ENCODE measurements at regions of chr9 and their contacts with region 1.

Region 1: GRCh38 chr9:131762356-131762932 is 22.6 kb upstream of the RAPGEF1 start:
- DNase-seq: peak; percentile 77 to 93 (median 90)
- ATAC-seq: peak; percentile 99
- H3K4me3 ChIP-seq: no peak overlapping the region
- H3K27ac ChIP-seq: no peak overlapping the region
- H3K4me1 ChIP-seq: peaks cover 0 to 7% of the 10 kb centered on the region in 2 experiments; a peak in 2 of 5 replicates
- H3K27me3 ChIP-seq: peaks cover 12 to 30% of the 10 kb centered on the region in 2 experiments
- CTCF ChIP-seq: peak; percentile 79 to 98 (median 92)
- EP300 ChIP-seq: no peak
- POLR2A ChIP-seq: no peak
- RAD21 ChIP-seq: peak; percentile 91 to 96

Region 2: DNA sequence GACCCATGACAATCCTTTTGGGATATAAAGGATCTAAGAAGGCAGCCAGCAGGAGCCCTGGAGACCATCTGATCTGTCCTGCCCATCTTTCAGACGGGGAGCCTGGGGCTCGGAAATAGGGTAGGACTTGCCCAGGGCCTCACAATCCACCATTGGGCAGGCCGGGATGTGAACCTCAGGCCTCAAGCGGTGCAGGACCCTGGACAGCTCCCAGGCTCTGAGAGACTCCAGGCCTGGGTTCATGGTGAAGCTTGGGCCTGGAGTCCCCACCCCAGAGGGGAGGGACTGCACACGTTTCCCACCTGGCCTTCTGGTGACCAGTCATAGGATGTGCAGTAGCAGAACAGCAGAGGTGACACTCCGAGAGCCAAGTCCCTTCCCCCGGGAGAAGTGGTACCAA is 14.0 kb after region 1 on chr9:
- CTCF ChIA-PET with region 1: no interaction called
- POLR2A ChIA-PET with region 1: no interaction called
- in situ Hi-C with region 1: no loop called
- intact Hi-C with region 1: no loop called
- DNase-seq: peak; percentile 62 to 76 (median 72)
- ATAC-seq: peak; percentile 88
- H3K4me3 ChIP-seq: no peak overlapping the region
- H3K27ac ChIP-seq: no peak overlapping the region
- H3K4me1 ChIP-seq: peaks cover 0 to 3% of the 10 kb centered on the region in 2 experiments; a peak in 2 of 5 replicates
- H3K27me3 ChIP-seq: peaks cover 2 to 39% of the 10 kb centered on the region in 2 experiments; a peak in 3 of 5 replicates
- CTCF ChIP-seq: no peak
- EP300 ChIP-seq: no peak
- POLR2A ChIP-seq: no peak
- RAD21 ChIP-seq: no peak

Region 3: GRCh38 chr9:131854896-131855613 is 92.6 kb after region 1 on chr9:
- CTCF ChIA-PET with region 1: interaction called, 5 read pairs
- POLR2A ChIA-PET with region 1: no interaction called
- in situ Hi-C with region 1: no loop called
- intact Hi-C with region 1: loop called (anchors 2 kb)
- DNase-seq: no peak
- ATAC-seq: no peak
- H3K4me3 ChIP-seq: no peak overlapping the region
- H3K27ac ChIP-seq: no peak overlapping the region
- H3K4me1 ChIP-seq: peaks cover 0 to 7% of the 10 kb centered on the region in 2 experiments; a peak in 3 of 5 replicates
- H3K27me3 ChIP-seq: peaks cover 10 to 37% of the 10 kb centered on the region in 2 experiments; a peak in 4 of 5 replicates
- CTCF ChIP-seq: no peak
- EP300 ChIP-seq: no peak
- POLR2A ChIP-seq: no peak
- RAD21 ChIP-seq: no peak

Region 4: GRCh38 chr9:132006677-132007370 is 244.4 kb after region 1 on chr9:
- CTCF ChIA-PET with region 1: no interaction called
- POLR2A ChIA-PET with region 1: no interaction called
- in situ Hi-C with region 1: no loop called
- intact Hi-C with region 1: no loop called
- DNase-seq: no peak
- ATAC-seq: no peak
- H3K4me3 ChIP-seq: no peak overlapping the region
- H3K27ac ChIP-seq: no peak overlapping the region
- H3K4me1 ChIP-seq: peaks cover 0 to 3% of the 10 kb centered on the region in 2 experiments; a peak in 1 of 5 replicates
- H3K27me3 ChIP-seq: no peaks in the 10 kb centered on the region
- CTCF ChIP-seq: no peak
- EP300 ChIP-seq: no peak
- POLR2A ChIP-seq: no peak
- RAD21 ChIP-seq: no peak

Region 5: DNA sequence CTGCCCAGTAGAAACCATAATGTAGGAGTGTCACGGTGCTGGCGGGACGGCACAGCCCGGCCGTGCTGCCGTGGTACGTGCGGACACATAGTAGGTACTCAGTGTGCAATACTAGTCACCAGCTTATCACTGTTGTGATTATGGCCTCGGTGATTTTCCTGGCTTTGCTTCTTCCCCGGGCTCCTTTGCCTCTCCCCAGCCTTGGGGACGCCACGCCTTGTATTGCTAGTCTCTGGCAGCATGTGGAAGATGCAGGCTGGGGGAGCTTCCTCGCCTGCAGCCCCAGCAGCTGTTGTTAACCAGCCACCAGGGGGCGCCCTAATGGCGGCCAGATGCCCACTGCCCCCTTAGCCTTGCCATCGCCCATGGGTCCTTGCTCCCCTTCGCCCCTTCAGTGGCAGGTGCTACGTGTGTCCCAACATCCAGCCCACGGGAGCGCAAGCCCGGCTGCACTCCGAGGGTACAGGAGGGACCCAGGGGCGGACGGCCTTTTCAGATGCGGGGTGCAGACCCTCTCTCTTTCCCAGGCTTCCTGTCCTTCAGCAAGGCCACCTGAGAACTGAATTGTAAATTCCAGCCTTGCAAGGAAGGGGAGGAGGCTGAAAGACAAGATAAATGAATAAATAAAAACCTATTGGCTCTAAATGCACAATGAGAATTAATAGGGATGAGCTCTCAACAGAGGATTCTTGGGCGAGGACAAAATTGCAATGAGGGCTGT is 407.4 kb after region 1 on chr9:
- CTCF ChIA-PET with region 1: no interaction called
- POLR2A ChIA-PET with region 1: no interaction called
- in situ Hi-C with region 1: no loop called
- intact Hi-C with region 1: loop called (anchors 5 kb)
- DNase-seq: peak; percentile 73 to 86 (median 80)
- ATAC-seq: peak; percentile 89
- H3K4me3 ChIP-seq: no peak overlapping the region
- H3K27ac ChIP-seq: no peak overlapping the region
- H3K4me1 ChIP-seq: peaks cover 0 to 11% of the 10 kb centered on the region in 2 experiments; a peak in 1 of 5 replicates
- H3K27me3 ChIP-seq: peaks cover 26 to 69% of the 10 kb centered on the region in 2 experiments
- CTCF ChIP-seq: peak; percentile 78 to 90 (median 89)
- EP300 ChIP-seq: no peak
- POLR2A ChIP-seq: no peak
- RAD21 ChIP-seq: peak; percentile 49 to 76

Region 6: DNA sequence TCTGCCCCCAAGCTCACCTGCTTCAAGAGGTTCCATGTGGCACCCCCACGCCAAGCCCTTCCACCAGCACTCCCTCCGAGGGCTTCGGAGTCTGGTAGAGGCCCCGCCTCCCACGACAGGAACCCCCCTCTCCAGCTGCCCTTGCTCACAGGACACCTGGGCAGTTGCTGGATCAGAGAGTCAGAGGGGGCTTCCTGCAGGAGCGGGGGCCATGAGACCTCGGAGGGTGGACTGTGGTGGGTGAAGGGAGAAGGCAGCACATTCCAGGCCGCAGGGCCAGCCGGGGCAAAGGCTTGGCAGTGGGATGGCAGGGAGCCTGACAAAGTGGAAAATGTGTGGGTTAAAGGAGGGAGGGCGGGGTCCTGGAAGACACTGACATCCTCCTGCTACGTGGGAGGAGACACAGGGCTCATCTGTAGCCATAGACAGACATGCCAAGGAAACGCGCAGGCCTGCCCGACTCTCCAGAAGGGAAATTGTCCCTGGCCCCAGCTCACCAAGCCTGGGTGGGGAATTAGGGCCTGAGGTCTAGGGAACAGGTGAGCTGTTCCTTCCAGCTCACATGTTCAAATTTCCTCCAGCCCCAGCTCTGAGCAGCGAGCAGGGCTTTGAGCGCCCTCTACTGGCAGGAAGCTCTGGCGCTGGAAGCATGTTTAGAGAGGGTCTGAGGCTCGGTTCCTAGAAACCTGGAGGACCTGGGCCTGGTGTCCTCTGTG is 473.7 kb after region 1 on chr9:
- CTCF ChIA-PET with region 1: interaction called, 5 read pairs
- POLR2A ChIA-PET with region 1: interaction called, 3 read pairs
- in situ Hi-C with region 1: no loop called
- intact Hi-C with region 1: loop called (anchors 2 kb)
- DNase-seq: peak; percentile 80 to 84 (median 82)
- ATAC-seq: peak; percentile 61
- H3K4me3 ChIP-seq: no peak overlapping the region
- H3K27ac ChIP-seq: no peak overlapping the region
- H3K4me1 ChIP-seq: peaks cover 0 to 32% of the 10 kb centered on the region in 2 experiments; a peak in 2 of 5 replicates
- H3K27me3 ChIP-seq: peaks cover 18 to 79% of the 10 kb centered on the region in 2 experiments; a peak in 4 of 5 replicates
- CTCF ChIP-seq: peak; percentile 89 to 97 (median 95)
- EP300 ChIP-seq: no peak
- POLR2A ChIP-seq: no peak
- RAD21 ChIP-seq: peak; percentile 67 to 88

Region 7: GRCh38 chr9:132250324-132251262 is 488.1 kb after region 1 on chr9:
- CTCF ChIA-PET with region 1: interaction called, 6 read pairs
- POLR2A ChIA-PET with region 1: no interaction called
- in situ Hi-C with region 1: loop called (anchors 5 kb)
- intact Hi-C with region 1: loop called (anchors 5 kb)
- DNase-seq: no peak
- ATAC-seq: no peak; the same call in 2 of the 3 replicates
- H3K4me3 ChIP-seq: no peak overlapping the region
- H3K27ac ChIP-seq: no peak overlapping the region
- H3K4me1 ChIP-seq: peaks cover 0 to 7% of the 10 kb centered on the region in 2 experiments; a peak in 2 of 5 replicates
- H3K27me3 ChIP-seq: peaks cover 7 to 38% of the 10 kb centered on the region in 2 experiments; a peak in 4 of 5 replicates
- CTCF ChIP-seq: no peak
- EP300 ChIP-seq: no peak
- POLR2A ChIP-seq: no peak
- RAD21 ChIP-seq: no peak

Region 8: DNA sequence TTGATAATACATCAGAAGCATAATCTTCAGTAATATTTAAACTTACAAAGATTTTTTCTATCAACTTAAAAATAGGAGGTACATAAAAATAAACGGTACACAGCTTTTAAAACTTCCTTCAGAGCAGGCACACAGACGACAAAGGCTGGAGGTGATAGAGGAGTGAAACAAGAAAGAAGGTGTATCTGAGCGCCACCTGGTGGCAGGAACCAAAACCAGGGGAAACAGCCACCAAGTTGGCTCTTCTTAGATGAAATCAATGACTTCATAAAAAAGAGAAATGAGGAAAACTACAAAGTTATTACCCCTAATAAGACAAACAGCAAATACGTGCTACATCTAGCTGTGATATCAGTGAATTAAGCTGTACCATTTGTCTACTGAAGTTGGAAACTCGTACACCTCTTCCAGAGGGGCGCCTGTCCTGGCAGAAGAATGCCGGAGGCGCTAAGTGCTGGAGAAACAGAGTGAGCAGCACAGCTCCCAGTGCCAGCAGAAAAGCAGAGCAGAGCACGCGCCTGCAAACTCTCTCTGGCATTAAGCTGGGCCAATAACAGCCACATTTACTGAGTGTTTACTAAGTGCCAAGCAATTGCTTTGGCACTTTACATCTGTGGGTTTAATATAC is 506.4 kb after region 1 on chr9:
- CTCF ChIA-PET with region 1: interaction called, 21 read pairs
- POLR2A ChIA-PET with region 1: no interaction called
- in situ Hi-C with region 1: no loop called
- intact Hi-C with region 1: no loop called
- DNase-seq: peak; percentile 63 to 77 (median 70)
- ATAC-seq: peak; percentile 91
- H3K4me3 ChIP-seq: no peak overlapping the region
- H3K27ac ChIP-seq: no peak overlapping the region
- H3K4me1 ChIP-seq: no peaks in the 10 kb centered on the region
- H3K27me3 ChIP-seq: no peaks in the 10 kb centered on the region
- CTCF ChIP-seq: peak; percentile 67 to 91 (median 81)
- EP300 ChIP-seq: no peak
- POLR2A ChIP-seq: no peak
- RAD21 ChIP-seq: peak; percentile 25 to 44; a peak in 2 of 4 replicates

Measured in K562 (cell line).